MCF 10A (cell line): ENCODE measurements at regions of chr3 and their contacts with region 1.

Region 1: DNA sequence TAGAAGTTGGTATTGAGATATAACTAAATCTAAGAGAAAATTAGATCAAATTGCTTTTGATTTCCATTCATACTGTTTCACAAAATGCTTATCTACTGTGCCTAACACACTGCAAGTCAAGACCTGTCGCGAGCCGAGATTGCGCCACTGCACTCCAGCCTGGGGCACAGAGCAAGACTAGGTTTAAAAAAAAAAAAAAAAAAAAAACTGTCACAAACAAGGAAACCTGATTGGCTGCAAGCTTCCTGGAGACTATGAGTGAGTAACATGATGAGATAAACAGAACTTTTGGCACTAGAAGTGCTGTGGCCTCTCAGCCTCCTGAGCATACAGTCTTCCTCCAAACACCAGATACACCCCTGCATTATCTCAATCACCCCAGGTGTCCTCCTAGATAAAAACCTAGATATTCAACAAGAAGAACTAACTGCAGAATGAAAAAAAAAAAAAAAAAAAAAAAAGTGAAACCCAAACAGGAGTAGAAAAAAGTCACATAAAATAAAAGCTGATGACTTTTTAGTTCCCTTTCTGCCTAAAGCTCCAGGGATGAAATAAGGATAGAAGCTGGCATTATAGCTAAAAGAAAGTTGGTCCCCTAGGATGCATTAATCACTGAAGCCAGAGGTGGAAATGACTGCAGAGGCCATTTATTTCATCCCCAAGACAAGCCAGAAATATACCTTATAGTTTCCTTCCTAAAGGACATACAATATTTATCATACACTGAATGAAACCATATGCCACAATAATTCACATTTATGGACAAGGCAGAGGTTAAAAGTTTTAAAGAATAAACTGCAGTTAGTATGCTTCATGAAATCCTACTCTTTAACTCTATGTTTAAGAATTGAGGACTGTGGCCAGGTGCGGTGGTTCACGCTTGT is 82.4 kb downstream of the P3H2 start:
- DNase-seq: peak; percentile 95
- H3K4me3 Mint-ChIP-seq: peak overlapping the region; percentile 54
- H3K27ac Mint-ChIP-seq: peak overlapping the region; percentile 69
- H3K4me1 Mint-ChIP-seq: peaks cover 30% of the 10 kb centered on the region
- H3K27me3 Mint-ChIP-seq: no peaks in the 10 kb centered on the region
- CTCF ChIP-seq: no peak

Region 2: GRCh38 chr3:189902230-189903186 is 135.8 kb before region 1 on chr3:
- CTCF ChIA-PET with region 1: no interaction called
- POLR2A ChIA-PET with region 1: no interaction called
- intact Hi-C with region 1: no loop called
- DNase-seq: no peak
- H3K4me3 Mint-ChIP-seq: no peak overlapping the region
- H3K27ac Mint-ChIP-seq: peak overlapping the region; percentile 0
- H3K4me1 Mint-ChIP-seq: no peaks in the 10 kb centered on the region
- H3K27me3 Mint-ChIP-seq: no peaks in the 10 kb centered on the region
- CTCF ChIP-seq: no peak

Region 3: DNA sequence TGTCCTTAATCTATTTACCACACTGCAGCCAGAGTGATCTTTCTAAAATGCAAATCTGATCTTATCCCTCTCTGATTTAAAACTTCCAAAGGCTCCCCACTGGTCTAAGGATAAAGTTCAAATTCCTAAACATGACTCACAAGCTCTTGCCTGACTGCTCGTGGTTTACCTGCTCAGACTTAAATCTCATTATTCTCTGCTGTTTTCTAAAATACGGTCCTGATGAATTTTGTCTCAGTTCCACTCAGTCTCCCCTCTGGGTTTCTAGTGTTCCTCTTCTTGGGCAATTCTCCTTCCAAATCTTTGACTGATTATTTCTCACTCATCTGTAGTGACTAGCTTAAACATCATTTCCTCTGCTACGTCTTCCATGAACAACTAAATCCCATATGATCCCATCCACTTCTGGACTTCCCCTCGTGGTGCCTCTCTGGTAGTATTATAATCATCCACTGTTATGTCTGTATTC is 25.9 kb before region 1 on chr3:
- CTCF ChIA-PET with region 1: interaction called, 6 read pairs
- POLR2A ChIA-PET with region 1: interaction called, 14 read pairs
- intact Hi-C with region 1: no loop called
- DNase-seq: peak; percentile 61
- H3K4me3 Mint-ChIP-seq: peak overlapping the region; percentile 34
- H3K27ac Mint-ChIP-seq: peak overlapping the region; percentile 64
- H3K4me1 Mint-ChIP-seq: peaks cover 39% of the 10 kb centered on the region
- H3K27me3 Mint-ChIP-seq: no peaks in the 10 kb centered on the region
- CTCF ChIP-seq: no peak

Region 4: DNA sequence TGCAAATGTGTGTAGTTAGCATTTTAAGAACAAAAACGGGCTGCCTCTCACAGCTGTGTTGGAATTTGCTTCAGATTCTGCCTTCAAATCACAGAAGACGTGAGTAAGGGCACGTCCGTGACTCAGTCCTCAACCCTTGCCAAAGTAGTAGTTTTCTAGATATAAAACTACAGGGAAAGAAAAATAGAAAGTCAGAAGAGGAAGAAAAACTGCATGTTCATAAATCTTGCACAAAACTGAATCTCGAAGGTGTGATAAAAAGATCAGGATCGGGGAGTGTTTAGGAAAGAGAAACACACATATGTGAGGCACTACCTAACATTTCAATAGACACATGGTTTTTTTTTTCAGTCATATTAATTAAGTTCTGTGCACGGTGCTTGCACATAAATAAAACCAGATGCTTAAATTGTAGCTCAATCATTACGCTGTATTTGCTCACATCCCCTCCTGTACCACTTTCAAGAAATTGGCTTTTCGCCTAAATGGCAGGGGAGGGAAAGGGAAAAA is 10.7 kb after region 1 on chr3:
- CTCF ChIA-PET with region 1: interaction called, 7 read pairs
- POLR2A ChIA-PET with region 1: interaction called, 24 read pairs
- intact Hi-C with region 1: no loop called
- DNase-seq: peak; percentile 49
- H3K4me3 Mint-ChIP-seq: peak overlapping the region; percentile 67
- H3K27ac Mint-ChIP-seq: peak overlapping the region; percentile 77
- H3K4me1 Mint-ChIP-seq: peaks cover 32% of the 10 kb centered on the region
- H3K27me3 Mint-ChIP-seq: no peaks in the 10 kb centered on the region
- CTCF ChIP-seq: no peak